ENCODE measurements at regions of chr13 and their contacts with region 1.

Region 1: GRCh38 chr13:74168263-74168675 is 34.1 kb upstream of the KLF12 start:
- DNase-seq: peak; percentile 75
- ATAC-seq: peak; percentile 97 to 99
- H3K4me3 ChIP-seq: peak overlapping the region; percentile 15 to 45 (median 38)
- H3K27ac ChIP-seq: peak overlapping the region; percentile 64 to 84 (median 74)
- H3K4me1 ChIP-seq: peaks cover 5 to 18% of the 10 kb centered on the region in 2 donors
- H3K27me3 ChIP-seq: no peaks in the 10 kb centered on the region
- CTCF ChIP-seq: no peak
- POLR2A ChIP-seq: peak in 1 of 2 donors; percentile 22

Region 2: GRCh38 chr13:73268306-73268705 is 900.0 kb before region 1 on chr13:
- in situ Hi-C with region 1: no loop called
- intact Hi-C with region 1: no loop called
- DNase-seq: peak in 1 of 2 donors; percentile 17
- ATAC-seq: no peak
- H3K4me3 ChIP-seq: no peak overlapping the region
- H3K27ac ChIP-seq: no peak overlapping the region
- H3K4me1 ChIP-seq: no peaks in the 10 kb centered on the region
- H3K27me3 ChIP-seq: no peaks in the 10 kb centered on the region
- CTCF ChIP-seq: no peak
- POLR2A ChIP-seq: no peak

Region 3: GRCh38 chr13:73991884-73992283 is 176.4 kb before region 1 on chr13:
- in situ Hi-C with region 1: no loop called
- intact Hi-C with region 1: no loop called
- DNase-seq: no peak
- ATAC-seq: no peak
- H3K4me3 ChIP-seq: no peak overlapping the region
- H3K27ac ChIP-seq: no peak overlapping the region
- H3K4me1 ChIP-seq: peaks cover 7 to 8% of the 10 kb centered on the region in 2 donors
- H3K27me3 ChIP-seq: no peaks in the 10 kb centered on the region
- CTCF ChIP-seq: no peak
- POLR2A ChIP-seq: no peak

Region 4: GRCh38 chr13:74203576-74203975 is 35.3 kb after region 1 on chr13:
- in situ Hi-C with region 1: no loop called
- intact Hi-C with region 1: loop called (anchors 2 kb)
- DNase-seq: peak in 1 of 2 donors; percentile 3
- ATAC-seq: peak; percentile 56 to 84
- H3K4me3 ChIP-seq: no peak overlapping the region
- H3K27ac ChIP-seq: no peak overlapping the region
- H3K4me1 ChIP-seq: peaks cover 20 to 30% of the 10 kb centered on the region in 2 donors
- H3K27me3 ChIP-seq: no peaks in the 10 kb centered on the region
- CTCF ChIP-seq: no peak
- POLR2A ChIP-seq: no peak

Region 5: GRCh38 chr13:74450964-74451363 is 282.7 kb after region 1 on chr13:
- in situ Hi-C with region 1: no loop called
- intact Hi-C with region 1: no loop called
- DNase-seq: no peak
- ATAC-seq: no peak
- H3K4me3 ChIP-seq: no peak overlapping the region
- H3K27ac ChIP-seq: no peak overlapping the region
- H3K4me1 ChIP-seq: no peaks in the 10 kb centered on the region
- H3K27me3 ChIP-seq: no peaks in the 10 kb centered on the region
- CTCF ChIP-seq: no peak
- POLR2A ChIP-seq: no peak

Region 6: DNA sequence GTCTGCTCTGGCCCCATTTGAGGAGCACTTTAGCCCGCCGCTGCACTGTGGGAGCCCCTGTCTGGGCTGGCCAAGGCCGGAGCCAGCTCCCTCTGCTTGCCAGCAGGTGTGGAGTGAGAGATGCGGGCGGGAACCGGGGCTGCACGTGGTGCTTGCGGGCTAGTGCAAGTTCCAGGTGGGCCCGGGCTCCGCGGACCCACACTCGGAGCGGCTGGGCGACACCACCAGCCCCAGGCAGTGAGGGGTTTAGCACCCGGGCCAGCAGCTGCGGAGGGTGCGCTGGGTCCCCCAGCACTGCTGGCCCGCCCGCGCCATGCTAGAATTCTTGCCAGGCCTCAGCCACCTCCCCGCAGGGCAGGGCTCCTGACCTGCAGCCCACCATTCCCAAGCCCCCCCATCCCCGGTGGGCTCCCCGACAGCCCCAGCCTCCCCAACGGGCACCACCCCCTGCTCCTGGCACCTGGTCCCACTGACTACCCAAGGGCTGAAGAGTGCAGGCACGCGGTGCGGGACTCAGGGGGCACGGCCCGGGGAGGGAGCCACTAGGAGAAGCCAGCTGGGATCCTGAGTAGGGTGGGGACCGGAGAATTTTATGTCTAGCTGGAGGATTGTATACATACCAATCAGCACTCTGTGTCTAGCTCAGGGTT is 1350.3 kb after region 1 on chr13:
- in situ Hi-C with region 1: no loop called
- intact Hi-C with region 1: no loop called
- DNase-seq: no peak
- ATAC-seq: no peak
- H3K4me3 ChIP-seq: no peak overlapping the region
- H3K27ac ChIP-seq: no peak overlapping the region
- H3K4me1 ChIP-seq: no peaks in the 10 kb centered on the region
- H3K27me3 ChIP-seq: no peaks in the 10 kb centered on the region
- CTCF ChIP-seq: no peak
- POLR2A ChIP-seq: no peak

Measured in gastrocnemius medialis (tissue), 4 donors.